ENCODE measurements at regions of chr2 and their contacts with region 1.

Region 1: DNA sequence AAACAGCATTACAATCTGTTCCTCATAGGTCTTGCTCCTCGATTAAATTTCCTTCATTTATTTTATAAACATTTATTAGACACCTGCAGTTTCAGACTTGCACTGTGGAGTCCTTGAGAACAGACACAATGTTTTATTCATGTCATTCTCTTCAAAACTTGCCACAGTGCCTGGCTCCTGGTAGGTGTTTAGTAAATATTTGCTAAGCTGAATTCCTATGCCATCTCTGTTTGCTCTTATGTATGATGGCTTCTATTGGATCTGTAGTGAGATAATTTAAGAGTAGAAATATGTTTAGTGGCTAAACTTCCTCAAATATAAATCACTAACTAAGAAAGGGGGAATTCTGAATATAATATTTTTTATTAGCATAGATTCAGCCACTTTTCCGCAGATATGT is 61.4 kb downstream of the LRATD1 start:
- DNase-seq: no peak
- ATAC-seq: no peak
- H3K4me3 ChIP-seq: no peak overlapping the region
- H3K27ac ChIP-seq: no peak overlapping the region
- H3K4me1 ChIP-seq: no peaks in the 10 kb centered on the region
- H3K27me3 ChIP-seq: no peaks in the 10 kb centered on the region
- CTCF ChIP-seq: no peak
- EP300 ChIP-seq: no peak
- POLR2A ChIP-seq: no peak
- RAD21 ChIP-seq: no peak

Region 2: DNA sequence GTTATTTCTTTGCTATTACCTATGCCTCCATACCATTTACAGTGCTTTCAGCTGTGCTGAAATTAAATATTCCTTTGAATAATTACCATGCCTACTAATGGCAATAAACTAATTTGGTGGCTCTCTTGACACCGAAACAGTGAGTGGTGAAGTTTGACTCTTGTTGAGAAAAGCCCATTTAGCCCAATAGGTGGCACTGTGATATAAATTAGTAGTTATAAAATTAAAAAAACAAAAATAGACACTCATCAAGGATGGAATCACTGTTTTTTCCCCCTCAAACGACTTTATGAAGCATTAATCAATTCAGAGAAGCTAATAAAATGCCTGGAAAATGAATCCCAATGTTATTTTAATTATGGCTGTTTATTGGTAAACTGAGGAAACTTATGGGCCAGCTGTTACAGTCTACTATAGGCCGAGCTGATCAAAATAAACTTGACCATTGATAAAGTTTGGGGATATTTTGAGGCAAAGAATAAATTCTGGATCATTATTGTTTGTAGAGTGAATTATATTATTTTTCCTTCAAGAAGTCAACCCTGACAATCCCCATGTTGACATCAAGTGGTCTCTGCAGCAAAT is 1637.5 kb before region 1 on chr2:
- CTCF ChIA-PET with region 1: no interaction called
- POLR2A ChIA-PET with region 1: no interaction called
- RAD21 ChIA-PET with region 1: no interaction called
- SMC1A ChIA-PET with region 1: no interaction called
- in situ Hi-C with region 1: no loop called
- intact Hi-C with region 1: loop called (anchors 10 kb)
- DNase-seq: no peak
- ATAC-seq: peak; percentile 41; the same call in 2 of the 3 replicates
- H3K4me3 ChIP-seq: no peak overlapping the region
- H3K27ac ChIP-seq: no peak overlapping the region
- H3K4me1 ChIP-seq: no peaks in the 10 kb centered on the region
- H3K27me3 ChIP-seq: no peaks in the 10 kb centered on the region
- CTCF ChIP-seq: peak; percentile 17 to 46 (median 25); a peak in 3 of 6 replicates
- EP300 ChIP-seq: no peak
- POLR2A ChIP-seq: no peak
- RAD21 ChIP-seq: 0 out of 2 replicates have a peak, but pooled peaks have one; percentile 19

Region 3: GRCh38 chr2:14428056-14428455 is 265.8 kb before region 1 on chr2:
- CTCF ChIA-PET with region 1: no interaction called
- POLR2A ChIA-PET with region 1: no interaction called
- RAD21 ChIA-PET with region 1: no interaction called
- SMC1A ChIA-PET with region 1: no interaction called
- in situ Hi-C with region 1: no loop called
- intact Hi-C with region 1: no loop called
- DNase-seq: no peak
- ATAC-seq: no peak
- H3K4me3 ChIP-seq: no peak overlapping the region
- H3K27ac ChIP-seq: no peak overlapping the region
- H3K4me1 ChIP-seq: no peaks in the 10 kb centered on the region
- H3K27me3 ChIP-seq: no peaks in the 10 kb centered on the region
- CTCF ChIP-seq: peak in 1 of 3 experiments; percentile 19; a peak in 1 of 6 replicates
- EP300 ChIP-seq: no peak
- POLR2A ChIP-seq: no peak
- RAD21 ChIP-seq: peak; percentile 27; the same call in 1 of the 2 replicates

Measured in GM12878 (cell line).